A549 (cell line): ENCODE measurements at regions of chr1 and their contacts with region 1.

Region 1: GRCh38 chr1:12658531-12659453 is 14.9 kb downstream of the AADACL4 start:
- DNase-seq: peak; percentile 81 to 93
- ATAC-seq: peak; percentile 91 to 96
- H3K4me3 ChIP-seq: no peak overlapping the region
- H3K27ac ChIP-seq: peak overlapping the region in 1 of 2 experiments; percentile 61; a peak in 3 of 6 replicates
- H3K4me1 ChIP-seq: 0 out of 3 replicates have a peak, but pooled peaks cover 4% of the 10 kb centered on the region
- CTCF ChIP-seq: peak; percentile 78
- EP300 ChIP-seq: no peak
- POLR2A ChIP-seq: no peak
- RAD21 ChIP-seq: peak; percentile 86 to 91

Region 2: DNA sequence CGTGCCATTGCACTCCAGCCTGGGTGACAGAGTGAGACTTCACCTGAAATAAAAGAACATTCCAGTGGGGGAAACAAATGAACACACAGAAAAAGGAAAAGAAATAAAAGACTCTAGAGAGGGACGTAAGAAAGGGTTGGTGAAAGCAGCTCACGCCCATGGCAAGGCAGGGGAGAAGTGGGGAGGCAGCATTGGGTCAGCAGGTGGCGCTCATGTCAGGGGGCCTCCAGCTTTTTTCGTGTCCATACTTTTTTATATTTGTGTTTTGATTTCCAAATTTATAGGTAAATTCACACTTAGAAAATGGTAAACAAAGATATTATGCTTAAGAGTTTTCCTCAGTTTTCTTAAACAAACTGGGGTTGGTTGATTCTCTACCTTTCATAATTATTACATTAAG is 383.4 kb before region 1 on chr1:
- CTCF ChIA-PET with region 1: interaction called, 17 read pairs
- POLR2A ChIA-PET with region 1: no interaction called
- DNase-seq: peak; percentile 27 to 35
- ATAC-seq: peak; percentile 70 to 80; a peak in 4 of 6 replicates
- H3K4me3 ChIP-seq: no peak overlapping the region
- H3K27ac ChIP-seq: no peak overlapping the region
- H3K4me1 ChIP-seq: peaks cover 5% of the 10 kb centered on the region; the same call in 1 of the 3 replicates
- CTCF ChIP-seq: peak; percentile 58
- EP300 ChIP-seq: no peak
- POLR2A ChIP-seq: no peak
- RAD21 ChIP-seq: peak; percentile 42 to 55; a peak in 4 of 5 replicates

Region 3: GRCh38 chr1:12314333-12314903 is 344.4 kb before region 1 on chr1:
- CTCF ChIA-PET with region 1: interaction called, 57 read pairs
- POLR2A ChIA-PET with region 1: no interaction called
- DNase-seq: peak; percentile 10 to 40
- ATAC-seq: peak in 1 of 2 experiments; percentile 79; a peak in 3 of 6 replicates
- H3K4me3 ChIP-seq: no peak overlapping the region
- H3K27ac ChIP-seq: peak overlapping the region; percentile 45 to 77; a peak in 5 of 6 replicates
- H3K4me1 ChIP-seq: peaks cover 10% of the 10 kb centered on the region; the same call in 2 of the 3 replicates
- CTCF ChIP-seq: peak; percentile 68
- EP300 ChIP-seq: no peak
- POLR2A ChIP-seq: no peak
- RAD21 ChIP-seq: peak; percentile 76 to 87

Region 4: GRCh38 chr1:12549460-12550349 is 109.1 kb before region 1 on chr1:
- CTCF ChIA-PET with region 1: no interaction called
- POLR2A ChIA-PET with region 1: no interaction called
- DNase-seq: peak; percentile 80 to 92
- ATAC-seq: peak; percentile 79 to 83
- H3K4me3 ChIP-seq: peak overlapping the region; percentile 26; the same call in 2 of the 3 replicates
- H3K27ac ChIP-seq: peak overlapping the region; percentile 81 to 98
- H3K4me1 ChIP-seq: peaks cover 38% of the 10 kb centered on the region
- CTCF ChIP-seq: no peak
- EP300 ChIP-seq: peak; percentile 52 to 70; a peak in 3 of 5 replicates
- POLR2A ChIP-seq: no peak
- RAD21 ChIP-seq: peak in 1 of 2 experiments; percentile 36; a peak in 3 of 5 replicates

Region 5: DNA sequence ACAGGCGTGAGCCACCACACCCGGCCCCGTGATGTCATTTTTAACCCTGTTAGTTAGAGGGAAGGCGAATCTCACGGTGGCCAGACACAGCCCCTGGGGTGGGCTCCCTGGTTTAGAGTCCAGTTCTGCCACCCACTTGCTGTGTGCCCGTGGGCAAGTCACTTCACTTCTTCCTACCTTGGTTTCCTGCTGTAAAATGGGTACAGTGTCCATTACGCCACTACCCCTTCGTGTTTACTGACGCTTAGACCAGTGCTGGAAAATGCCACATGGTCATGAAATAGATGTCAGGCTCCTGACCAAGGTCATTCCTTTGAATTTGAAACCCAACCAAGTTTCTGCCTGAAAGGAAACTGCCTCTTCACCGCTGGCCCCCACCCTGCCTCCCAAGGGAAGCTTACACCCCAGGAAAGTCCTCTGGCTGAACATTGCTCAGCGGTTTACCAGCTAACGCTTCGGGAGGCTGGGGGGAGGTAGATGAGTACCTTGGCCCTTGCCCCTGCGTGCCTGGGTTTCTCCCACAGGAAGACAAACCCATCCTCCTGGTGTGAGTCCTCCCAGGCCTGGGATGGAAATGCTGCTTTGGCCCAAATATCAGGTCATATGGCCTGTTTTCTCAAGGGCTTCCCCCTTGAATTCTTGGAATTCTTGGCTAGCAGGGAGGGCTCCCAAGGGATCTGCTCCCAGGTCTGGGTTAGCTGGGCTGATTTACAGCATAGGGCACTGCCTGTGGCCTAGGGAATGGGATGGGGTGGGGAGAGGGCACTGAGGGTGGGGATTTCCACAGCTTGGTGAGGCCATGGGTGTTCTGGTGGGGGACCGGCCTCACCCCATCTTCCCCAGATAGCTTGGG is 22.5 kb before region 1 on chr1:
- CTCF ChIA-PET with region 1: interaction called, 17 read pairs
- POLR2A ChIA-PET with region 1: no interaction called
- DNase-seq: no peak
- ATAC-seq: peak; percentile 59 to 90
- H3K4me3 ChIP-seq: no peak overlapping the region
- H3K27ac ChIP-seq: peak overlapping the region in 1 of 2 experiments; percentile 39; a peak in 3 of 6 replicates
- H3K4me1 ChIP-seq: peaks cover 5% of the 10 kb centered on the region; the same call in 1 of the 3 replicates
- CTCF ChIP-seq: no peak
- EP300 ChIP-seq: no peak
- POLR2A ChIP-seq: no peak
- RAD21 ChIP-seq: no peak

Region 6: GRCh38 chr1:12669529-12670068 is 10.8 kb after region 1 on chr1:
- CTCF ChIA-PET with region 1: interaction called, 23 read pairs
- POLR2A ChIA-PET with region 1: no interaction called
- DNase-seq: no peak
- ATAC-seq: no peak
- H3K4me3 ChIP-seq: no peak overlapping the region
- H3K27ac ChIP-seq: no peak overlapping the region
- H3K4me1 ChIP-seq: no peaks in the 10 kb centered on the region
- CTCF ChIP-seq: no peak
- EP300 ChIP-seq: no peak
- POLR2A ChIP-seq: no peak
- RAD21 ChIP-seq: no peak

Region 7: DNA sequence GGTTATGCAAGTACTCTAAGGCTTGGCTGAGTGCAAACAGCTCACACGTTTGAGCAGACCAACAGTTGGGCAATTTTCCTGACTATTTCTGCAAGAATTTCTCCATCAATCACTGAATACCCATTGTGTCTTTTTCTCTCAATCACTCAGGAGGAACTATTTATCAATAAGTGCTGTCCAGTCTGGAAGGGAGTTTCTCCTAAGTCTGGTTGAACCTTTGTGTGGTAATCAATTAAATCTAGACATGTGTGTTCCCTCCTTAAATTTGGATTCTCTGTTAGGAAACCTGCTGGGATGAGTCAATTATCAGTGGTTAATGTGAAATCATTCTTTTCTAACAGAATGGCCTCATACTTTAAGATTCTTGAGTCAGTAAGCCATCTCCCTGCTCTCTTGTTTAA is 50.3 kb after region 1 on chr1:
- CTCF ChIA-PET with region 1: no interaction called
- POLR2A ChIA-PET with region 1: no interaction called
- DNase-seq: no peak
- ATAC-seq: no peak
- H3K4me3 ChIP-seq: no peak overlapping the region
- H3K27ac ChIP-seq: no peak overlapping the region
- H3K4me1 ChIP-seq: no peaks in the 10 kb centered on the region
- CTCF ChIP-seq: no peak
- EP300 ChIP-seq: no peak
- POLR2A ChIP-seq: no peak
- RAD21 ChIP-seq: no peak